Heart left ventricle (tissue), 16 donors: ENCODE measurements at regions of chr1 and their contacts with region 1.

Region 1: DNA sequence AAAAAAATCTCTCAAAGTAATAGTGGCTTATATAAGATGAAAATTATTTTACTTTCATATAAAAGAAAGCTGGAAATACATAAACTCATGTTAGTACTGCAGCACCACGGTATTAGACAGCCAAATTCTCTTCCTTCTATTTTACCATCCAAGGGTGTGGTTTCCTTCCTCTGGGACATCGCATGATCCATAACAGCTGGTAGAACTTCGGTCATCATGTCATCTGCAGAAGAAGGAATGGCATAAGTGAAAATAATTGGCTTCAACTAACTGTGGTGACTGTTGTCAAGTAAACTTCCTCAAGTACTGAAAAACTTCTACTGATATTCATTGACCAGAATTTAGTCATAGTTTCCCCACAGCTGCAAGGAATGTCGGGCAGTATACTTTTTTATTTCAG is 28.3 kb upstream of the IFI44L start:
- DNase-seq: no peak
- ATAC-seq: peak in 3 of 4 donors; percentile 64 to 75 (median 65)
- H3K4me3 ChIP-seq: no peak overlapping the region
- H3K27ac ChIP-seq: no peak overlapping the region
- H3K4me1 ChIP-seq: no peaks in the 10 kb centered on the region
- H3K27me3 ChIP-seq: no peaks in the 10 kb centered on the region
- CTCF ChIP-seq: no peak
- POLR2A ChIP-seq: no peak

Region 2: DNA sequence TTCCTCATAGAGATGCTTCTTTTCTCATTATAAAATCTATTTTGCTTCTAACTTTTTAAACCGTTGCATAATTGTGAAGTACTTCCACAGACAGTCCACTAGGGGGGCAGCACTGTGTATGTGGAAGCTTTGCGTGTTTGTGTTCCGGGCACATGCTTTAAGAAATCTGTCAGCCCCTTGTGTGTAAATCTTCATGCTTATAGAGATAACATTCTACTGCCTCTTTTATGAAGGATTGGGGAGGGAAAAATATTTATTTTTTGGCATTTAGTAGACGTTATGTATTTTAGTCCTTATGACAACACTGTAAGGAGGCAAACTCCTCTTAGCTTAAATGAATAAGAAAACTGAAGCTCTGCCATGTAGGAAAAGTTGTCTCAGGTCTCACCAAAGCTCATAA is 258.5 kb before region 1 on chr1:
- intact Hi-C with region 1: loop called in 1 of 10 experiments (anchors 10 kb)
- DNase-seq: no peak
- ATAC-seq: peak in 1 of 4 donors; percentile 49
- H3K4me3 ChIP-seq: no peak overlapping the region
- H3K27ac ChIP-seq: peak overlapping the region in 3 of 12 donors; percentile 3 to 70 (median 23)
- H3K4me1 ChIP-seq: no peaks in the 10 kb centered on the region
- H3K27me3 ChIP-seq: no peaks in the 10 kb centered on the region
- CTCF ChIP-seq: peak; percentile 26 to 66 (median 44)
- POLR2A ChIP-seq: no peak

Region 3: DNA sequence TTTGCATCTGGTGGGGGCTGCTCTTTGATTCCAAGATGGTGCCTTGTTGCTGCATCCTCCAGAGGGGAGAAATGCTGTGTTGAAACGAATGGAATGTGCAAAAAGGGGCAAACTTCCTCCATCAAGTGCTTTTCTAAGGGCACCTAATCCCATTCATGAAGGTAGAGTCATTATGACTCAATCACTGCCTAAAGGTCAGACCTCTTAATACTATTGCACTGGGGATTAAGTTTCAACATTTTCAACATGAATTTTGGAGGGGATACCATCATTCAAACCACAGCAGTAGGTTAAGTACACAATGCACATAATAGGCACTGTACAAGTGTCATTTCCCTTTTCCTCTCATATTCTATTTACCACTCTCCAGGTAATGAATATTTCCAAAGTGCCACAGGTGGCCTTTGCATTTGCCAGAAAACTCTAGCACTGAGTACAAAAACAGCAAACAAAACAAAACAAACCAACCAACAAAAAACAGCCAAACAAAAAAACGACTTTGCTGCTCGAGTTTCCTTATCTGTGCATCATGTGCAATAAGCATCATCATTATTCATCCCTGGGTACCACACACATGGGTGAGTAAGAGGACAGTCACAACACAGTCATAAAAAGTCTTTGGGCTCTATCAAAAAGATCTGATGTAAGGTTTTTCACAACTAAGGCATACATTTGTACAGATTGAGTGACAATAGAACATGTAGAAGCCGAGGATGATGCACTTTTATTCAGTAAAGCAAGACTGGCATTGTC is 100.2 kb after region 1 on chr1:
- intact Hi-C with region 1: no loop called
- DNase-seq: no peak
- ATAC-seq: no peak
- H3K4me3 ChIP-seq: no peak overlapping the region
- H3K27ac ChIP-seq: no peak overlapping the region
- H3K4me1 ChIP-seq: no peaks in the 10 kb centered on the region
- H3K27me3 ChIP-seq: no peaks in the 10 kb centered on the region
- CTCF ChIP-seq: no peak
- POLR2A ChIP-seq: no peak

Region 4: GRCh38 chr1:79079770-79080169 is 487.8 kb after region 1 on chr1:
- intact Hi-C with region 1: no loop called
- DNase-seq: peak in 3 of 5 donors; percentile 35 to 51 (median 39)
- ATAC-seq: peak; percentile 81 to 97 (median 89)
- H3K4me3 ChIP-seq: no peak overlapping the region
- H3K27ac ChIP-seq: peak overlapping the region in 4 of 12 donors; percentile 23 to 56 (median 38)
- H3K4me1 ChIP-seq: peaks cover 0 to 17% (median 0%) of the 10 kb centered on the region in 12 donors
- H3K27me3 ChIP-seq: no peaks in the 10 kb centered on the region
- CTCF ChIP-seq: no peak
- POLR2A ChIP-seq: no peak